ENCODE measurements at regions of chr1 and their contacts with region 1.

Region 1: DNA sequence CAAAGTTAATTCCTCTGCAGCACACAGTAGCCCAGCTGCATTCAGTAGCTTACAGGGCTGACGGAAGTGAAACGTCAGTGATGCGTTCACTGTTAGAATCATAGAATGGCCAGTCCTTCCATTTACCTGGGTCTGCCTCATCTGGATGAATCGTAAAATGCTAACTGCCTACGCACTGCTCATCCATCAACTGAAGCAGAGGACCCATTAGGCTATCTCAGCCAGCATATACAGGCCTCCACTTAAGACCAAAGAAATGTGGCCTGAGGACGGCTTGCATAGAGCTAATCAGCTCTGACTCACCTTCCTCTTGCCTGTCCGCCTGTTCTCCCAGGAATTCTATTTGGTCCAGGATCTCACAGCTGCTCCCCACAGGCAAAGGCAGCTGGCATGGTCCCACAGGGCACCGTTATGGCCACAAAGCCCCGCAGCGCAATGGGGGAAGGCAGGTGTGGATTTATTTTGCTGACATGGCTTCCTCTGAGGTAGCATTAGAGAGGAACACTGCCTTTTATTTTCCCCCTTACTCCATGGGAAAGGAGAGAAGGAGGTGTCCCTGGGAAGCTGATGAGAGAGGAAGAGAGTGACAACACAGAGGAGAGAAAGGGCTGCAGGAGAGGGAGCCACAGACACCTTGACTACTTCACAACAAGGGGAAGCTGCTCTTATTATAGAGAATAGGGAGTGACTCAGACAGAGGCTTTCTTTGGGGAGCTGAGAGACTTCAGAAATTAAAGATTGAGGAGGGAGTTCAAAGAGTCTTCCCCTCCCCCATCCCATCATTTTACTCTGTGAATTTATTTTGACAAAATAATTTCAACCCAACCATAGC is 177.6 kb downstream of the HHIPL2 start:
- DNase-seq: no peak
- H3K4me3 ChIP-seq: no peak overlapping the region
- H3K27ac ChIP-seq: no peak overlapping the region
- H3K4me1 ChIP-seq: no peaks in the 10 kb centered on the region
- H3K27me3 ChIP-seq: no peaks in the 10 kb centered on the region
- CTCF ChIP-seq: no peak

Region 2: DNA sequence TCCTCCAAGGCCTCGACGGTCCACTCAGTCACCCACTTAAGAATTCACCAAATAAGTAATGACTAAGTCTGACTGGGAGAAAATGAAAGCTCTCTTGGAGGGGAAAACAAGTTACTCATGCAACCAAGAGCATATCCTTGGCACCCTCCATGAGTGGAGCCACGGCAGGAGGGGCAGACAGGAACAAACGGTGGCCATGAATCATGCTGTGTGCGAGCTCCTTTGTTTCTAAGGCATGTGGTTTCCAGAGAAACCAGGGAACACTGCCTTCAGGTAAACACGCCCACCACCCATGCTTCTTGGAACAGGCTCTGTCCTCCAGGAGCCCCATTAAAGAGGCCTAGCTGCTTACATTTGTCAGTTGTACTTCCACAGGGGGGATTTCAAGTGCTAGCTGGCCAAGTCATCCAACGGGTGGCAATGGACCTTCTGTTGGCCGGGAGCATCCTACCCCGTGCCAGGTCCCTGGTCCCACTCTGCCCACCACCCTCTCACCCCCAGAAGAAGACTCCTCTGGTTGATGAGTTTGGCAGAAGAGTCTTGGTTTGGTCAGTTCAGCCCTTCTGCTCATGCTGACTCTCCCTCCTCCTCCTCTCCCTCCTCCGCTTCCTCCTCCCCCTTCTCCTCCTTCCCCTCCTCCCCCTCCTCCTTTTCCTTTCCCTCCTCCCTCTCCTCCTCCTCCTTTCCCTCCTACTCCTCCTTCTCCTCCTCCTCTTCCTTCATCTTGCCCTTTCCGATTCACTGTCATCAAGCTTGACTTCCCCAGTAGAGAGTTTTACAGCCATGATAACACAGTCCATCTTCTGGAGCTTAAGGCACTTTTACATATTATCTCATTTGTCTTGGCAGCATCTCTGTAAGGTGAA is 1130.5 kb after region 1 on chr1:
- intact Hi-C with region 1: loop called (anchors 5 kb)
- DNase-seq: no peak
- H3K4me3 ChIP-seq: no peak overlapping the region
- H3K27ac ChIP-seq: no peak overlapping the region
- H3K4me1 ChIP-seq: peaks cover 0 to 5% (median 0%) of the 10 kb centered on the region in 4 donors
- H3K27me3 ChIP-seq: no peaks in the 10 kb centered on the region
- CTCF ChIP-seq: no peak

Measured in tibial artery (tissue), 4 donors.